CD4-positive, alpha-beta T cell (primary cell): ENCODE measurements at regions of chr4 and their contacts with region 1.

Region 1: DNA sequence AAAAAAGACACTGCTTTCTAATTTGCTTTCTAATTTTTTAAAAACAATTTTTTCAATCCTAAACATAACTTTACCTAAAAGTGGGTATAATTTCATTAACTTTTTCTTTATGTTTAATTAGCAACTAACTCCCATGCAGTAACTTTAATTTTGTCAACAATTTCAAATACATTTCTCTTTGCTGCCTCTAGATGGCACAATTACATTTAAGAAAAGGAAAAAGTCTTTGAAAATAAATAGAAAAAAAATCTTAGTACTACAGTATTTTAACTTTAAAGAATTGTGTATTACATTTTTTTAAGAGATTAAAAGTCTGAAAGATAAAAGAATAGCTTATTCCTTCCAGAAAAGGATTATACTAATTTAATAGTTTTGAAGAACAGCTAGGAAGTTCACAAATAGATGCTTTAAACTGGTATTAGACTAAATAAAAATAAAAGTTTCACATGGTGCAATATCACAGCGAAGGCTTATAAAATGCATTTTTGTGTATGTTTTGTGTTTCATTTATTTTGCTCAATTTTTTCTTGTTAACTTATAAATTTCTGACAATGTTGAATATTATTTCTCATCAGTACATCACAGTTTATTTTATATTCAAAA is 105.1 kb downstream of the ADGRA3 start:
- DNase-seq: peak in 2 of 14 experiments; percentile 0 to 4
- ATAC-seq: no peak
- H3K4me3 ChIP-seq: no peak overlapping the region
- H3K4me3 Mint-ChIP-seq: no peak overlapping the region
- H3K27ac ChIP-seq: no peak overlapping the region
- H3K27ac Mint-ChIP-seq: no peak overlapping the region
- H3K4me1 ChIP-seq: no peaks in the 10 kb centered on the region
- H3K4me1 Mint-ChIP-seq: no peaks in the 10 kb centered on the region
- H3K27me3 ChIP-seq: no peaks in the 10 kb centered on the region
- H3K27me3 Mint-ChIP-seq: no peaks in the 10 kb centered on the region
- CTCF ChIP-seq: peak; percentile 67

Region 2: DNA sequence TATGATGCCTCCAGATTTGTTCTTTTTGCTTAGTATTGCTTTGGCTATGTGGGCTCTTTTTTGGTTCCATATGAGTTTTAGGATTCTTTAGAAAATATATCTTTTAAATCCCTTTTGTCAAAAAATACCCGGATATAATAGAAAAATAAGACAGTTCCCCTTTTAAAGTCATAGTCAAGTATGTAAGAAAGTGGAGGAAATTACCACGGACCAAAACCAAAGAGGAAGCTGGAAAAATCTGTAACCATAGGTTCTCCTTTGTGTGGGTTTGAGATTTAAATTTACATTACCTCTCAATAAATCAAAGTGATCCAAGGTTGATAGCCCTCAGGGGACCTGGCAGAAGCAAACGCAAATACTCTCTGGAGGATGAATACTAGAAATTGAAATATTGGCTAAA is 1768.8 kb before region 1 on chr4:
- CTCF ChIA-PET with region 1: no interaction called
- POLR2A ChIA-PET with region 1: no interaction called
- intact Hi-C with region 1: no loop called
- DNase-seq: no peak
- ATAC-seq: no peak
- H3K4me3 ChIP-seq: no peak overlapping the region
- H3K4me3 Mint-ChIP-seq: no peak overlapping the region
- H3K27ac ChIP-seq: no peak overlapping the region
- H3K27ac Mint-ChIP-seq: no peak overlapping the region
- H3K4me1 ChIP-seq: no peaks in the 10 kb centered on the region
- H3K4me1 Mint-ChIP-seq: no peaks in the 10 kb centered on the region
- H3K27me3 ChIP-seq: no peaks in the 10 kb centered on the region
- H3K27me3 Mint-ChIP-seq: peaks cover 4% of the 10 kb centered on the region
- CTCF ChIP-seq: no peak

Region 3: DNA sequence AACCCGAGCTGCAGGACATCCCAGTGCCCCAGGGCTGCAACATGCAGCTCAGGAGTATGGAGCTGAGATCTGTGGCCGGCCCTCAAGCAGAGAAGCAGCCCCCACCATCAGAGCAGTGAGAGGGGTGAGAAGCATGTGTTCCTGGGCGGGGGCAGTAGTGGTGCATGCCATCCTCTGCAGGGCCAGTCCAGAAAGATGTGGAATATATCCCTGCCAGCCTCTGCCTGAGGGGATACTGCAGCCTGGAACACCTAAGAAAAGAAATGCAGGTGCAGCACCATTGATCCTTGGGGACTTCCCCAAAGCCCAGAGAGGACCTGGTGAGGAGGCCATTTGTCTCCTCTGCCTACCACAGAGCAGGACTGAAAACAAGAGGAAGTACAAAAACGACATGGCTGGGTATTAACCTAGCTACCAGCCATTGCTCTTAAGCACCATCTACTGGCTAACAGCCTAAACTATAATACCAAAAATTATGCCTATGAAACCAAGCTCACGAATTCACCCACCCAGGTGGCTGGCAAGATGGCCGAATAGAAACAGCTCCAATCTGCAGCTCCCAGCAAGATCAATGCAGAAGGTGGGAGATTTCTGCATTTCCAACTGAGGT is 53.7 kb before region 1 on chr4:
- CTCF ChIA-PET with region 1: no interaction called
- POLR2A ChIA-PET with region 1: no interaction called
- intact Hi-C with region 1: no loop called
- DNase-seq: peak in 2 of 14 experiments; percentile 1 to 9
- ATAC-seq: no peak
- H3K4me3 ChIP-seq: no peak overlapping the region
- H3K4me3 Mint-ChIP-seq: no peak overlapping the region
- H3K27ac ChIP-seq: no peak overlapping the region
- H3K27ac Mint-ChIP-seq: no peak overlapping the region
- H3K4me1 ChIP-seq: no peaks in the 10 kb centered on the region
- H3K4me1 Mint-ChIP-seq: no peaks in the 10 kb centered on the region
- H3K27me3 ChIP-seq: no peaks in the 10 kb centered on the region
- H3K27me3 Mint-ChIP-seq: no peaks in the 10 kb centered on the region
- CTCF ChIP-seq: no peak

Region 4: GRCh38 chr4:22607382-22607781 is 196.6 kb after region 1 on chr4:
- CTCF ChIA-PET with region 1: no interaction called
- POLR2A ChIA-PET with region 1: no interaction called
- intact Hi-C with region 1: loop called (anchors 1 to 10 kb)
- DNase-seq: peak in 10 of 14 experiments; percentile 10 to 63 (median 44)
- ATAC-seq: peak; percentile 99
- H3K4me3 ChIP-seq: no peak overlapping the region
- H3K4me3 Mint-ChIP-seq: no peak overlapping the region
- H3K27ac ChIP-seq: no peak overlapping the region
- H3K27ac Mint-ChIP-seq: peak overlapping the region; percentile 66
- H3K4me1 ChIP-seq: peaks cover 2% of the 10 kb centered on the region
- H3K4me1 Mint-ChIP-seq: peaks cover 35% of the 10 kb centered on the region
- H3K27me3 ChIP-seq: no peaks in the 10 kb centered on the region
- H3K27me3 Mint-ChIP-seq: no peaks in the 10 kb centered on the region
- CTCF ChIP-seq: peak; percentile 12

Region 5: GRCh38 chr4:22688236-22688635 is 277.5 kb after region 1 on chr4:
- CTCF ChIA-PET with region 1: no interaction called
- POLR2A ChIA-PET with region 1: no interaction called
- intact Hi-C with region 1: loop called (anchors 1 kb)
- DNase-seq: no peak
- ATAC-seq: no peak
- H3K4me3 ChIP-seq: no peak overlapping the region
- H3K4me3 Mint-ChIP-seq: no peak overlapping the region
- H3K27ac ChIP-seq: no peak overlapping the region
- H3K27ac Mint-ChIP-seq: no peak overlapping the region
- H3K4me1 ChIP-seq: peaks cover 3% of the 10 kb centered on the region
- H3K4me1 Mint-ChIP-seq: peaks cover 16% of the 10 kb centered on the region
- H3K27me3 ChIP-seq: no peaks in the 10 kb centered on the region
- H3K27me3 Mint-ChIP-seq: no peaks in the 10 kb centered on the region
- CTCF ChIP-seq: no peak